ENCODE measurements at regions of chr1 and their contacts with region 1.

Region 1: DNA sequence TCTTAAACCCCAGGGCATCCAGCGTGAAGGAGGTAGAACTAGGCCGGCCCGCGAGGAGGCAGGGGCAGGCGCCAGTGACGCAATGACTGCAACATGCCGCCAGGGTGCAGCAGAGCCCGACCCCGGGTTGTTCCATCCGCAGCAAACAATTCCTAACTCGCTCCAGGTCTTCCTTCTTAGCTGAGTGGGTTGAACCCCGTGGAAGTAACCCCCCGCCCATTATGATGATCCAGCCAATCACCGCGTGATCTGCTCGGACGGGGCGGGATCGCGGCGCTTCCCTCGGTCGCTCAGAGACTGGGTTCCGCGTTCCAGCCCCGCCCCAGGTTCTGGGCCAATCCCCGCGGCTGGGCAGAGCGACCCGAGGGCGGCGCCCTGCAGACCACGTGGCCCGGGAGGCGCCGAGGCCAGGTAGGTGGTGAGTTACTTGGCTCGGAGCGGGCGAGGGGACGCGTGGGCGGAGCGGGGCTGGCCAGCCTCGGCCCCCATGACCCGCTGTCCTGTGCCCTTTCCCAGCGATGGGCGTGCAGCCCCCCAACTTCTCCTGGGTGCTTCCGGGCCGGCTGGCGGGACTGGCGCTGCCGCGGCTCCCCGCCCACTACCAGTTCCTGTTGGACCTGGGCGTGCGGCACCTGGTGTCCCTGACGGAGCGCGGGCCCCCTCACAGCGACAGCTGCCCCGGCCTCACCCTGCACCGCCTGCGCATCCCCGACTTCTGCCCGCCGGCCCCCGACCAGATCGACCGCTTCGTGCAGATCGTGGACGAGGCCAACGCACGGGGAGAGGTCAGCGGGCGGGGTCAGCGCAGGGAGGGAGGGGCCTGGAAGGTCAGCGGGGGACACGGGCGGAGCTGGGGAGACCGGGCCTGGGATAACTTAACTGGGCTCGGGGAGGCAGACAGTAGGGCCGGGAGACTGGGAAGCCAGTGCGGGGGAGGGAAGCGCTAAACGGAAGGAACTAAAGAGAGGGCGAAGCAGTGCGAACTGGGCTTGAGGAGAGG is at the start of gene DUSP23:
- DNase-seq: peak; percentile 97 to 98
- ATAC-seq: peak; percentile 98 to 99 (median 99)
- H3K4me3 ChIP-seq: peak within 1 kb of the TSS; percentile 66 to 91 (median 80)
- H3K27ac ChIP-seq: peak within 1 kb of the TSS; percentile 16 to 92 (median 81)
- H3K4me1 ChIP-seq: peaks cover 0 to 28% (median 11%) of the 10 kb centered on the region in 9 donors
- H3K27me3 ChIP-seq: no peaks in the 10 kb centered on the region
- CTCF ChIP-seq: peak; percentile 87 to 98 (median 94)
- total RNA-seq, gene DUSP23: 7.0 to 22.8 (median 10.2) TPM

Region 2: DNA sequence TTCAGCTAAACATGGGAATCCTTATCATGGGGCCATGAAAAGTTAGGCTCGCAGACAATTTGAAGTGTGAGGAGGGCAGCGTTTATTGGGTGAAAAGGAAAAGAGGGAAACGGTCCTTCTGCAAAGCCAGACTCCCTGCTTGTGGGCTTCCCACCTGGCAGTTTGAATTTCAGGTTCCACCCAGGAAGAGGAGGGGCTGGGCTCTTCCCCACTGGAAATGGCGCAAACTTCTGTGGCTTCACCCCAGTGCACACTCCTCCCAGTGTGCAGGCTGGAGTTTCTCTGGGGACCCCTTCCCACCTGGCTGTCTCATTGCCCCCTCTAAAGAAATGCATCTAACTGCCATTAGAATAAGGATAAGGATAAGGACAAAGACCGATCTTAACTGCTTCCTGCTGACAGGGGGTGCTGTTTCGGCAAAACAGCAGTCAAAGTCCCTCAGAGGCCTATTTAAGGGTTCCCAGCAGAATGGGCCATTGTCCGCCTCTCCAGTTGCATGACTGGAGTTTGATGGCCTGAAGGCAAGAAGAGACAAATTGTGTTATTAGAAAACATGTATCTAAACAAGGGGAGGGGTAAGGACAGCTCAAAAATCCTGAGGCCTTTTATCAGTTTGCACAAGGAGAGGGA is 724.7 kb before region 1 on chr1:
- intact Hi-C with region 1: loop called in 1 of 10 experiments (anchors 10 kb)
- DNase-seq: no peak
- ATAC-seq: no peak
- H3K4me3 ChIP-seq: no peak overlapping the region
- H3K27ac ChIP-seq: no peak overlapping the region
- H3K4me1 ChIP-seq: peaks cover 0 to 49% (median 13%) of the 10 kb centered on the region in 9 donors
- H3K27me3 ChIP-seq: no peaks in the 10 kb centered on the region
- CTCF ChIP-seq: no peak

Region 3: DNA sequence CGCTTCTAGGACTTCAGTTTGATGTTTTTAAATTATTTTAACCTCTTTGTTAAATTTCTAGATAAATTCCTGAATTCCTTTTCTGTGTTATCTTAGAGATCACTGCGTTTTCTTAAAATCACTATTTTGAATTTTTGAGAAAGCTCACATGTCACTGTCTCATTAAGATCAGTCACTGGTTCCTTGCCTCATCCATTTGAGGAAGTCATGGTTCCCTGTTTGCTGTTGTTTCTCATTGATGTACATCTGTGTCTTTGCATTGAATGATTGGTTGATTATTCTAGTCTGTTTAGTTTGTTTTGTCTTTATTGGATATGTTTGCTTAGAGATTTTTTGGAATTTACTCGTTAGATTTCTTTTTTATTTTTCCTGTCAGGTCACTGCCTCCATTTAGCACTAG is 116.6 kb before region 1 on chr1:
- intact Hi-C with region 1: loop called in 1 of 10 experiments (anchors 10 kb)
- DNase-seq: no peak
- ATAC-seq: no peak
- H3K4me3 ChIP-seq: no peak overlapping the region
- H3K27ac ChIP-seq: peak overlapping the region in 1 of 10 donors; percentile 75
- H3K4me1 ChIP-seq: peaks cover 0 to 10% (median 0%) of the 10 kb centered on the region in 9 donors
- H3K27me3 ChIP-seq: no peaks in the 10 kb centered on the region
- CTCF ChIP-seq: no peak

Region 4: GRCh38 chr1:159891275-159892157 is 110.6 kb after region 1 on chr1:
- intact Hi-C with region 1: loop called in 2 of 10 experiments (anchors 5 kb)
- DNase-seq: peak; percentile 82 to 84
- ATAC-seq: peak; percentile 71 to 90 (median 86)
- H3K4me3 ChIP-seq: no peak overlapping the region
- H3K27ac ChIP-seq: peak overlapping the region in 6 of 10 donors; percentile 39 to 86 (median 80)
- H3K4me1 ChIP-seq: peaks cover 0 to 48% (median 32%) of the 10 kb centered on the region in 9 donors
- H3K27me3 ChIP-seq: no peaks in the 10 kb centered on the region
- CTCF ChIP-seq: peak; percentile 83 to 99 (median 94)

Region 5: DNA sequence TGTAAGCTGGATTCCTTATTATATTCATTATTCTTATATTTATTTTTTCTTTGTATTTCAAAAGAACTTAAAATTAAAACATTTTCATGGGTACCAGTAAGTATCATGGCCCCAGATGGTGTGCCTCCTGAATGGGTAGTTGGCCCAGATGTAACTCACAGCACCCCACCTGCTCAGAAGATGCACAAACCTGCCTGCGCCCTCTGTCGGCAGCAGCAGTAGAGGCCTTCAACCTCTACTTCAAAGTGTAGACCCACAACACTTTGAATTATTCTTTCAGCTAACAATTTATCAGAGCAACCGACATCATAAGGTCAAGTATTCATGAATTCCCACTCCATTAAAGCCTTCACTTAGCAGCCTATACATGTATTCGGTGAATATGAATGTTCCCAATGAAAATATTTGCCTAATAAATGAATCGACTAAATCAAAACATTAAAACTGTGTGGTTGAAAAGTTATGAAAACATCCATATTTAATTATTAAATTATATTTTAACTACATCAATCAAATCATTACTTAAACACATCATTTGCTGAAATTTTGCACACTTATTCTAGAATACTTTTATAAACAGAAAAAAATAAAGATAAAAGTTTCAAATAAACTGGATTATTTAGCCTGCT is 225.5 kb after region 1 on chr1:
- intact Hi-C with region 1: loop called in 2 of 10 experiments (anchors 5 kb)
- DNase-seq: peak; percentile 35 to 72
- ATAC-seq: peak in 4 of 8 donors; percentile 47 to 78 (median 54)
- H3K4me3 ChIP-seq: no peak overlapping the region
- H3K27ac ChIP-seq: no peak overlapping the region
- H3K4me1 ChIP-seq: no peaks in the 10 kb centered on the region
- H3K27me3 ChIP-seq: no peaks in the 10 kb centered on the region
- CTCF ChIP-seq: peak; percentile 36 to 91 (median 77)

Region 6: GRCh38 chr1:160031365-160032164 is 250.7 kb after region 1 on chr1 and contains the start of gene PIGM:
- intact Hi-C with region 1: loop called in 3 of 10 experiments (anchors 5 to 10 kb)
- DNase-seq: peak; percentile 93 to 94
- ATAC-seq: peak; percentile 95 to 98 (median 97)
- H3K4me3 ChIP-seq: peak within 1 kb of the TSS; percentile 61 to 89 (median 76)
- H3K27ac ChIP-seq: peak within 1 kb of the TSS in 9 of 10 donors; percentile 55 to 86 (median 74)
- H3K4me1 ChIP-seq: peaks cover 4 to 34% (median 22%) of the 10 kb centered on the region in 9 donors
- H3K27me3 ChIP-seq: no peaks in the 10 kb centered on the region
- CTCF ChIP-seq: no peak
- total RNA-seq, gene PIGM: 2.0 to 3.0 (median 2.5) TPM